Thyroid gland (tissue), 4 donors: ENCODE measurements at regions of chr3 and their contacts with region 1.

Region 1: GRCh38 chr3:176941689-176942088 is 255.6 kb downstream of the TBL1XR1 start:
- DNase-seq: no peak
- H3K4me3 ChIP-seq: no peak overlapping the region
- H3K27ac ChIP-seq: no peak overlapping the region
- H3K4me1 ChIP-seq: no peaks in the 10 kb centered on the region
- H3K27me3 ChIP-seq: no peaks in the 10 kb centered on the region
- CTCF ChIP-seq: no peak
- POLR2A ChIP-seq: no peak

Region 2: GRCh38 chr3:176872771-176873209 is 68.9 kb before region 1 on chr3:
- intact Hi-C with region 1: loop called (anchors 2 kb)
- DNase-seq: peak; percentile 65 to 68
- H3K4me3 ChIP-seq: no peak overlapping the region
- H3K27ac ChIP-seq: peak overlapping the region in 1 of 3 donors; percentile 13
- H3K4me1 ChIP-seq: peaks cover 0 to 13% of the 10 kb centered on the region in 2 donors
- H3K27me3 ChIP-seq: no peaks in the 10 kb centered on the region
- CTCF ChIP-seq: peak; percentile 26 to 91 (median 76)
- POLR2A ChIP-seq: no peak

Region 3: DNA sequence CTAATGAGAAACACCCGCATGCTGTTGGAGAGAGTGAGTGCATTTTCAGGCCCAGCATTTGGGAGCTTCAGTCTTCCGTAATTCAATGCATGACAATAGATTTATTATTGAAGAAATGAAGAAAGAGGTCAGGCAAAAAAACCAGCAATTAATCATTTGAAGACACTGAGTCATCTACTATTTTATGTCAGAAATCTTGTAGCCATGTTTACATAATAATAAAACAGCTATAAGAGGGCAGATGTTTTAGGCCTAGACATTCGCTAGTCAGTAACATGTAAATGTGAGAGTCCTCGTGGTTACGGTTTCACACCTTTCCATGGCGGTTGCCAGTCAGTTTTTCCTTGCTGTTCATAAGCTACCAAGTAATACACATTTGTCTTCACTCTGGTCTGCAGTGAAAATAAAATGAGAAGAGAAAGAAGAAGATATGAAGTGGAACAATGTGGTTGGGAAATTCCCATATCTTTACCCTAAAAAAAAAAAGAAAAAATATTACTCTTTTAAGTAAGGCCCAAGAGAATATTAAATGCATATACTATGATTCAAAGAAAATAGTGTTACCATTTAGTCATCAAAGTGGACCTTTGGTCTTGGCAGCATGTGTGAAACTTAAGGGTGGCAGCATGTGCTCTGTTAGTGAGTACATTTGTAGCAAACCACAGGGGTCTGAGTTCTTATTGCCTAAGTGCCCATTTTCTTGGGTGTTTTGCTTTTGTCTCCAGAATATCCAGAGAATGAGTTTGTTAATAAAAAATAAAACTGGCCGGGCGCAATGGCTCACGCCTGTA is 396.0 kb after region 1 on chr3:
- intact Hi-C with region 1: no loop called
- DNase-seq: no peak
- H3K4me3 ChIP-seq: no peak overlapping the region
- H3K27ac ChIP-seq: peak overlapping the region in 1 of 3 donors; percentile 71
- H3K4me1 ChIP-seq: peaks cover 22 to 40% of the 10 kb centered on the region in 2 donors
- H3K27me3 ChIP-seq: no peaks in the 10 kb centered on the region
- CTCF ChIP-seq: no peak
- POLR2A ChIP-seq: no peak